Activated B cell treated with CpG ODN at 0.5 μM for 24 hours (primary cell): ENCODE measurements at regions of chr19 and their contacts with region 1.

Region 1: GRCh38 chr19:13952154-13953035 is at the start of gene DCAF15:
- DNase-seq: peak; percentile 89
- ATAC-seq: peak; percentile 96
- H3K4me3 Mint-ChIP-seq: peak within 1 kb of the TSS; percentile 94
- H3K27ac Mint-ChIP-seq: peak within 1 kb of the TSS; percentile 90
- H3K4me1 Mint-ChIP-seq: peaks cover 18% of the 10 kb centered on the region
- H3K27me3 Mint-ChIP-seq: no peaks in the 10 kb centered on the region
- CTCF ChIP-seq: no peak
- total RNA-seq, gene DCAF15: 71.4 and 83.4 TPM in 2 replicates

Region 2: DNA sequence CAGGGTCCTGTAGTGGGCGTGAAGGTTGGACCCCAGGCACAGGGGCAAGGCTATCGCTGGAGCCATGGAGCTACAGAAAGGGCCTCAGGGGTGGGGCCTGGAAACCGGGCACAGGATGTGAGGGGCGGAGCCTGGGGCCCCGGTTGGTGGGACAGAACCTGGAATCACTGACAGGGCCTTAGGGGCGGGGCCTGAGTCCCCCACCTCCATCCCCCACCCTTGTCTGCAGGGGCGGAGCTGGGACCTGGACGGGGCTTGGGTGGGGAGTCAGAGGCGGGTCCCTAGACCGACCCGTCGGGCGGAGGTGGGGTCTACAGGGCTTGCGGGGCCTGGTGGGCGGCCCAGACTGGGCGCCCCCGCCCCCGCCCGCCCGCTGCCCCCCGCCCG is 25.9 kb after region 1 on chr19:
- CTCF ChIA-PET with region 1: no interaction called
- POLR2A ChIA-PET with region 1: interaction called, 10 read pairs
- intact Hi-C with region 1: no loop called
- DNase-seq: no peak
- ATAC-seq: peak; percentile 36
- H3K4me3 Mint-ChIP-seq: peak overlapping the region; percentile 50
- H3K27ac Mint-ChIP-seq: no peak overlapping the region
- H3K4me1 Mint-ChIP-seq: peaks cover 42% of the 10 kb centered on the region
- H3K27me3 Mint-ChIP-seq: no peaks in the 10 kb centered on the region
- CTCF ChIP-seq: no peak

Region 3: DNA sequence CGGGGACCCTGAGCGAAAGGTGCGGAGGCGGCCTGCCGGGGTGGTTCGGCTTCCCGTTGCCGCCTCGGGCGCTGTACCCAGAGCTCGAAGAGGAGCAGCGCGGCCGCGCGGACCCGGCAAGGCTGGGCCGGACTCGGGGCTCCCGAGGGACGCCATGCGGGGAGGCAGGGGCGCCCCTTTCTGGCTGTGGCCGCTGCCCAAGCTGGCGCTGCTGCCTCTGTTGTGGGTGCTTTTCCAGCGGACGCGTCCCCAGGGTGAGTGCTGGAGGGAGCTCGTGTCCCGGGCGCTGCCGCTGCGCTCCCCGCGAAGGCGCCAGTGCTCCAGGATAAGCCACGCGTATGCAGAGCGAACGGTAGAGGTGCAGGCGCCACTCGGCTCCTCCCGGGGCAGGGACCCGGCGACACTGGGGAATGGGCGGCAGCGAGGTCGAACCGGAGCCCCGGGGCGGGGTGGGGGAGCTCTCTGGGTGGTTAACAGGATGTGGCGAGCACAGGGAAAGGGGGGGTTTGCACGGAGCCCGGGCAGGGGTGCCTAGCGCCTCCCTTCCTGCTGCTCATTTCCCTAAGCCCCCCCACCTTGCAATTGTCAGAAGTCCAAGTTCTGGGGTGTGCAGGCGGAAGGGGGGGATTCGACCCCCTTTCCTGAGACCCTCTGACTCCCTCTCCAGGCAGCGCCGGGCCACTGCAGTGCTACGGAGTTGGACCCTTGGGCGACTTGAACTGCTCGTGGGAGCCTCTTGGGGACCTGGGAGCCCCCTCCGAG is 79.5 kb after region 1 on chr19 and contains the start of gene IL27RA:
- CTCF ChIA-PET with region 1: interaction called, 4 read pairs
- POLR2A ChIA-PET with region 1: interaction called, 21 read pairs
- intact Hi-C with region 1: loop called (anchors 1 kb)
- DNase-seq: peak; percentile 70
- ATAC-seq: peak; percentile 74
- H3K4me3 Mint-ChIP-seq: peak within 1 kb of the TSS; percentile 91
- H3K27ac Mint-ChIP-seq: peak within 1 kb of the TSS; percentile 89
- H3K4me1 Mint-ChIP-seq: peaks cover 34% of the 10 kb centered on the region
- H3K27me3 Mint-ChIP-seq: no peaks in the 10 kb centered on the region
- CTCF ChIP-seq: no peak
- total RNA-seq, gene IL27RA: 34.5 and 34.6 TPM in 2 replicates

Region 4: DNA sequence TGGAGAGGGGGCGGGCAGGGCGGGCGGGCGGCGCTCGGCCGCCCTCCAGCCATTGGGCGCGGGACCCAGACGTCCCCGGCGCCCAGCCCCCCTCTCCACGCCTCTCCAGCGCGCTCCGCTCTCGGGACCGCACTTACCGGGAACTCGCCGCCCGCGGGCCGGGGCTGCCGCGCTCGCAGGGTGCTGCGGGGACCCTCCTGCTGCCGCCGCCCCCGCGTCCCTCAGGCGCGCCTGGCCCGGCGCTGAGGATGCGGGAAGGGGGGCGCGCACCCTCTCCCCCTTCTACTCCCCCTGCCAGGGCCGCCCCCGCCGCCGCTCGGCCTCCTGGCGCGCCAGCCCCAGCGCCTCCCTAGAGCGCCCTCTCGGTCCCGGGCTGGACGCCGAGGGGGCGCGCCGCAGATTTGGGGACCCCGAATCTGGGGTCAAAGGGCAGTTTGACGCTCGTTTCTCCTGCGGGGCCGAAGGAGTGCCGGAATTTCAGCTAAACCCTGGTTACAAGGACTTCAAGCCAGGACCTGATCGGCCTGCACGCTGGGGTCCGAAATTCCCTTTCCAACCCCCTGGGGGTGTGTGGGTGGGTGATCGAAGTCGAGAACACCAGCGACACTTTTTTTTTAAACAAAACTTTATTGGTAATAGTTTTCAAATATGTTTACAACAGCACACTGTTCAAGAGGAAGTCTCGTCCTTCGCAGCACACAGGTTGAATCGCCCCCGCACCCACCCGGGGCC is 138.9 kb after region 1 on chr19:
- CTCF ChIA-PET with region 1: no interaction called
- POLR2A ChIA-PET with region 1: no interaction called
- intact Hi-C with region 1: loop called (anchors 1 kb)
- DNase-seq: peak; percentile 81
- ATAC-seq: peak; percentile 75
- H3K4me3 Mint-ChIP-seq: peak overlapping the region; percentile 99
- H3K27ac Mint-ChIP-seq: peak overlapping the region; percentile 99
- H3K4me1 Mint-ChIP-seq: peaks cover 18% of the 10 kb centered on the region
- H3K27me3 Mint-ChIP-seq: no peaks in the 10 kb centered on the region
- CTCF ChIP-seq: no peak

Region 5: DNA sequence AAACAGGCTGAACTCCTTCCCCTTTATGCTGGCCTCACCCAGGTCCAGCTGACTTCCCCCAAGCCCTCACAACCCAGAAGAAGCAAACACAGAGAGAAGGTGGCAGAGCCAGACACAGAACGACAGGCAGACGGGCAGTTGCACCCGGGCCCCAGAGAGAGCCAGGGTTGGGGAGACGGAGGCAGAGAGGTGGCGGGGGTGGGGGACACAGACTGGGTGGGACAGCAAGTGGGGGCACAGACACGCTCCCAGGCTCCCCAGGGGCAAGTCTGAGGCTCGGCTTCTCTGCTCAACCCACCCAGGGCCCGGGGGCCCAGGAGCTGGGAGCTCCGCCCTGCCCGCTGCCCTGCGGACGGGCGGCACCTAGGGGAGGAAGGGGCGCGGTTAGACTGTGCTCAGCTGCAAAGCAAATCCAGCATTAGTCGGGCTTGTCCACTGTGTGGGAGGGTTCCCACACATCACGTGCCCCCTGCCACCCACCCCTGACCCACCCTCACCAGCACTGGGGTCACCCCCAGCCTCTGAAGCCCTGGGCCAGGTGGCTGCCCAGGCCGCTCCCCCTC is 215.3 kb after region 1 on chr19:
- CTCF ChIA-PET with region 1: no interaction called
- POLR2A ChIA-PET with region 1: no interaction called
- intact Hi-C with region 1: no loop called
- DNase-seq: peak; percentile 32
- ATAC-seq: peak; percentile 72
- H3K4me3 Mint-ChIP-seq: peak overlapping the region; percentile 72
- H3K27ac Mint-ChIP-seq: no peak overlapping the region
- H3K4me1 Mint-ChIP-seq: peaks cover 22% of the 10 kb centered on the region
- H3K27me3 Mint-ChIP-seq: peaks cover 7% of the 10 kb centered on the region
- CTCF ChIP-seq: no peak